ENCODE measurements at regions of chr6 and their contacts with region 1.

Region 1: DNA sequence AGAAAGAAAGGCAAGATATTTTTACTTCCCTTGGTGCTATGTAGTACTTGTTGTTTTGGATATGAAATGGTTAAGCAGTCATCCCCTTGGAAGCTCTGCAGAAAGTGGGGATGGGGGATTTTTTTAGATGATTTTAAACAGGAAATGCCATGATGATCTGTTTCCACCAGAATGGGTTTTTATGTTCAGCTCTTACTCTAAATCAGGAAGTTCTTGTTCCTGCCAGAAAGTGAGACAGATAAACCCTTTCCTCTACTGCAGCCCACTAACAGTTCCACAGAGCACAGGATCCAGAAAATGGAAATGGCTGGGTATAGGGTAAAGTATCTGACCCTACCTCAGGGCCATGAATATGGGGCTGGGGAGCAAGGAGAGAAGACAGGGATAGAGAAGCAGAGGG is 32.1 kb upstream of the PPP1R3G start:
- DNase-seq: no peak
- ATAC-seq: no peak
- H3K4me3 ChIP-seq: no peak overlapping the region
- H3K27ac ChIP-seq: no peak overlapping the region
- H3K4me1 ChIP-seq: peaks cover 0 to 4% (median 0%) of the 10 kb centered on the region in 12 donors
- H3K27me3 ChIP-seq: no peaks in the 10 kb centered on the region
- CTCF ChIP-seq: no peak
- POLR2A ChIP-seq: no peak

Region 2: GRCh38 chr6:4812068-4812467 is 241.0 kb before region 1 on chr6:
- intact Hi-C with region 1: no loop called
- DNase-seq: no peak
- ATAC-seq: peak; percentile 29 to 69 (median 63)
- H3K4me3 ChIP-seq: no peak overlapping the region
- H3K27ac ChIP-seq: no peak overlapping the region
- H3K4me1 ChIP-seq: peaks cover 0 to 30% (median 16%) of the 10 kb centered on the region in 12 donors
- H3K27me3 ChIP-seq: no peaks in the 10 kb centered on the region
- CTCF ChIP-seq: no peak
- POLR2A ChIP-seq: no peak

Region 3: DNA sequence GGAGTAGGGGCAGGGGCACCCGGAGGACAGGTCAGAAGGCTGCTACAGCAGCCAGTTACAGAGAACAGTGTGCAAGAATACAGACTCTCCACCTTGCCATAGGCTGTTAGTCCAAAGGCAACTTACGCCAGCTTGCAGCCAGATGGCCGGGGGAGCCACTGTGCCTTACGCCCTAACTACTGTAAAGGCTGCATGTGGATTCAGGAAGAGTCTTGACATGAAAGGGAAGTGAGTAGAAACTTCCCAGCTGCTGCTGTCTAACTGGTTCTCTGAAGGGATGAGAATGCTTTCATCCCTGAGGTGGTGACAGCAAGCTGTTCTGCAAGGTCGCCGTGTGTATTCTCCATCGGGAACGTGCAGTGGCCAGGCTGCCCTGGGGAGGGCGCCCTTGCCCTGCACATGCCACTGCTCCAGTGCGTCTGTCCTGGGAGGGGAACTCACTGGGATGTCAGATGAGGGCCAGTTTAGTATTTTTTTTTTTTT is 161.6 kb after region 1 on chr6:
- intact Hi-C with region 1: loop called in 1 of 10 experiments (anchors 10 kb)
- DNase-seq: peak in 4 of 5 donors; percentile 39 to 72 (median 55)
- ATAC-seq: peak; percentile 86 to 94 (median 90)
- H3K4me3 ChIP-seq: peak overlapping the region in 1 of 12 donors; percentile 16
- H3K27ac ChIP-seq: peak overlapping the region in 5 of 12 donors; percentile 11 to 36 (median 17)
- H3K4me1 ChIP-seq: peaks cover 0 to 34% (median 15%) of the 10 kb centered on the region in 12 donors
- H3K27me3 ChIP-seq: no peaks in the 10 kb centered on the region
- CTCF ChIP-seq: peak; percentile 51 to 77 (median 70)
- POLR2A ChIP-seq: no peak

Region 4: GRCh38 chr6:5302995-5303622 is 250.1 kb after region 1 on chr6:
- intact Hi-C with region 1: loop called in 1 of 10 experiments (anchors 10 kb)
- DNase-seq: peak; percentile 27 to 68 (median 44)
- ATAC-seq: peak; percentile 66 to 92 (median 90)
- H3K4me3 ChIP-seq: no peak overlapping the region
- H3K27ac ChIP-seq: no peak overlapping the region
- H3K4me1 ChIP-seq: peaks cover 0 to 17% (median 4%) of the 10 kb centered on the region in 12 donors
- H3K27me3 ChIP-seq: no peaks in the 10 kb centered on the region
- CTCF ChIP-seq: peak; percentile 22 to 63 (median 46)
- POLR2A ChIP-seq: no peak

Region 5: DNA sequence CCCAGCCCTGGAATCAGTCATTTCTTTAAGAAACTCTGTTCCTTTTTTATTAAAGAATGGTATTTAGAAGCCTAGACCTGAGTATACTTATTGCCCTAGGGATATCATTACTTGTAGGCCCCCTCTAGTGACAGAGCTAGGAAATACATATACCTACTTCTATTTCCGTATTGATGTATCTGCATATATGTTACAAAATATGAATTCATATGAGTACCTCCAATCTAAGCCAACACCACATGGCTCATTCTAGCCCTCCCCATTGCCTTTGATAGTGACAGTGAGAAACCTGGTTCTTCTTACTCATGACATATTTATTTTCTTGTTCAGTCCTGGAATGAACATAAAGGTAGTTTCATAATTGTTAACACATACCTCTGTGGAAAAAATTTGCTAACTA is 345.5 kb after region 1 on chr6:
- intact Hi-C with region 1: loop called in 6 of 10 experiments (anchors 5 to 10 kb)
- DNase-seq: no peak
- ATAC-seq: no peak
- H3K4me3 ChIP-seq: no peak overlapping the region
- H3K27ac ChIP-seq: no peak overlapping the region
- H3K4me1 ChIP-seq: peaks cover 0 to 7% (median 0%) of the 10 kb centered on the region in 12 donors
- H3K27me3 ChIP-seq: no peaks in the 10 kb centered on the region
- CTCF ChIP-seq: peak; percentile 28 to 61 (median 43)
- POLR2A ChIP-seq: no peak

Measured in heart left ventricle (tissue), 16 donors.